ENCODE measurements at regions of chr12 and their contacts with region 1.

Region 1: DNA sequence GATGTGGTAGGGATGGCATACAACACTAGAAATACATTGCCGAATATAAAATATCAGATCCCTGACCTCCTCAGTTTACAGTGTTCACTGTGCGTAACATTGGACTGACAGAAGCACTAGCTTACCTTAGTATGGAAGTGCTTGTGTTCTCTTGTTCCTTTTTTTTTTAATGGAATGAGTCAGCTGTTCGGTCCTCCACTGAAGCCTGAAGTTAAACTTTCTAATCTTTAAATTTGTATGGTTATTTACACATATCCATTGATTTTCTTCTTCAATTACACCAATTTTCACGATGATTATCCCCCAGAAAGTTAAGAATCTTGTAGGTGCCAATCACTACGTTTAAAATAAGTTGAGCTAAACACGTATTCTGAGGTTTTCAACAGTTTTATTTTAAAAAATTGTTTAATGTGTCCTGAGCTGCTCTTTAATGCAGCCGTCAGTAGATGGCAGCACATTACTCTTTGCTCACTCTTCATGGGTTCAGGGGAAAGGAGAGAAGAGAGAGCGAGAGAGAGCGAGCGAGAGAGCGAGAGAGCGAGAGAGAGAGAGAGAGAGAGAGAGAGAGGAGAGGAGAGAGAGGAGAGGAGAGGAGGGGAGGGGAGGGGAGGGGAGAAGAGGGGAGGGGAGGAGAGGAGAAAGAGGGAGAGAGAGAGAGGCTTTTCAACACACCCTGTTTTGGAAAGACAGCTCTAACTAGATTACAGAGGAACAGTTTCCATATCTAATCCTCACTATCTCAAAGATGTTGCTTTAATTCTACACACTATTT is 134.7 kb upstream of the SCAF11 start:
- DNase-seq: peak; percentile 69
- H3K4me3 Mint-ChIP-seq: peak overlapping the region; percentile 49
- H3K27ac Mint-ChIP-seq: peak overlapping the region; percentile 71
- H3K4me1 Mint-ChIP-seq: peaks cover 3% of the 10 kb centered on the region
- H3K27me3 Mint-ChIP-seq: peaks cover 24% of the 10 kb centered on the region

Region 2: GRCh38 chr12:45713078-45713477 is 412.0 kb before region 1 on chr12:
- CTCF ChIA-PET with region 1: no interaction called
- DNase-seq: no peak
- H3K4me3 Mint-ChIP-seq: no peak overlapping the region
- H3K27ac Mint-ChIP-seq: no peak overlapping the region
- H3K4me1 Mint-ChIP-seq: no peaks in the 10 kb centered on the region
- H3K27me3 Mint-ChIP-seq: no peaks in the 10 kb centered on the region

Region 3: DNA sequence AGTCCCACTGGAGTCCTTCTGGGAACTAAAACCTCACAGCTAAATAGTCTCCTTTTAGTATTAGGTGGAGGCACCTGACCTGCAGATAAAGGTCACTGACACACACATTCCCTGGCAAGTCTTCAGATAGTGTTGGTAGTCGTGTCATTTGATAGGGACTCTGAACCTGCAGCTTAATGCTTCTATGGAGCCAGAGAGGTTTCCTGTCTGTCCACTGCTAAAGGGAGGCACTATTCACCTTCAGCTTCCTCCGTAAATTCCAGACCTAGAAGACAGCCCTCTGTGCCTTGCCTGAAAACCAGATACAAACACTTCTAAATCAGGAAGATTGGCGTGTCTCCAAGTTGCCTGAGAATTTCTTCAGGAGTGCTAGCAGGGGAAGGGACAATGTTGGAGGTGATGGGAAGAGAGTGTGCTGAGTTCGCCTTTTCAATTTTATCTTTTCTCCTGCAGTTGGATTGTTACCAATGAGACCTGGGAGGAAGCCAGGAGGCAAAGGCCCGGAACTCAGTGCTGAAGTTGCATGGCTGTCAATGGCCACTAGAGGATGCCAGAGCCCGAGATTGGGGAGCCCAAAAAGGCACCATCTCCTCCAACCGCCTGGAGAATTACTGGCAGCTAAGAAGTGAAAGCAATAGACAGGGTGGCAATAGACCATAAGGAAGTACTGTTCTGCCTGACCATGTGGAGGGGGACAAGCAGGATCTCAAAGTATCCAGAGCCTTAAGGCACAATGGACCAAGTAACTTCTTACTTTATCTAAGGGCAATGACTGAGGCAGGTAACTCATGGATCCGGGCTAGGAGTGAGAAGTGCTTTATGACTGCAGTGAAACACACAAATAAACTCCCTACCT is 53.0 kb before region 1 on chr12:
- CTCF ChIA-PET with region 1: interaction called, 10 read pairs
- DNase-seq: peak; percentile 70
- H3K4me3 Mint-ChIP-seq: no peak overlapping the region
- H3K27ac Mint-ChIP-seq: no peak overlapping the region
- H3K4me1 Mint-ChIP-seq: peaks cover 20% of the 10 kb centered on the region
- H3K27me3 Mint-ChIP-seq: no peaks in the 10 kb centered on the region

Region 4: DNA sequence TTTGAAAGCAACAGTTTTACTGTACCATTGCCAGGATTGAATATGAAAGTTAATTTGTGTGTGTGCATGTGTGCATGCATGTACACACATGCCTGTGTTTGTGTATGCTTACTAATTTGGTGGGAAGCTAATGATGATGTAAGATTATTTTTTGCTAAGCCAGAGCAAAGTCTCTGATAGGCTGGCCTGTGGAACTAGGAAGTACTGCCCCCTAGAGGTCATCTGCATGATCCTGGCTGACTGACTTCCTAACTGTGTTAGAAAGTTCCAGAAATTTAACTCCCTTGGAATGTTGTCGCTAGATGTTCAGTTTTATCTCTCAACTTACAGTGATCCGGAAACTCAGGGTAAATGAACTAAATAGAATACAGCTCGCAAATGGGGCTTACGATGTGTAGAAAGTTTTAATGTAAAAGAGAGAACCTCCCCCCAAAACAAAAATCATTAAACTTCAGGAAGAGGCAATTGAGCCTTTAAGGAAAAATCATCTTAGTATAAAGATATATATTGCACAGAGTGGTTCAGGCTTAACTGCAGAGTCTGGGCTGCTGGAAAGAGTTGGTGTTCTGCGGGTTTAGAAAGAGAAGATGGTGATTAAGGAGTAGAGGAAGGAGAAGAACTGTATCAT is 178.1 kb after region 1 on chr12:
- CTCF ChIA-PET with region 1: interaction called, 29 read pairs
- DNase-seq: peak; percentile 60
- H3K4me3 Mint-ChIP-seq: no peak overlapping the region
- H3K27ac Mint-ChIP-seq: no peak overlapping the region
- H3K4me1 Mint-ChIP-seq: peaks cover 3% of the 10 kb centered on the region
- H3K27me3 Mint-ChIP-seq: peaks cover 8% of the 10 kb centered on the region

Region 5: DNA sequence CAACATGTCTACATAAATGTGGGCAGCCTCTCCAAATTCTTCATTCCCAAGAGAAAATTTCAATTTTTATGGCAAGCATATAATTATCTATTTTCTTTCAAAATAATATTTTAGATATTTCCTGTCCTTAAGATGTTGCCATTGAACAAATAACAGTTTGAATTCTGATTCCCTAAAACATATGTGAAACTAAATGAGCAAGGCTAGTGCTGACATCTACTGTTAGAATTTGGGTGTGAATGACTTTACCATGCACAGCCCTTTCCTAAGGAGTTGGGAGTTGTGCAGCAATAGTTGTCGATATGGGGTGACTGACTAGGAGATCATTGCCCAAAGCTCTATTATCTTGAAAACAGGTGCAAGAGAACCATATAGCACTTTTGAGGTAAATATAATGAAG is 808.9 kb after region 1 on chr12:
- CTCF ChIA-PET with region 1: interaction called, 10 read pairs
- DNase-seq: no peak
- H3K4me3 Mint-ChIP-seq: no peak overlapping the region
- H3K27ac Mint-ChIP-seq: no peak overlapping the region
- H3K4me1 Mint-ChIP-seq: no peaks in the 10 kb centered on the region
- H3K27me3 Mint-ChIP-seq: peaks cover 16% of the 10 kb centered on the region

Region 6: DNA sequence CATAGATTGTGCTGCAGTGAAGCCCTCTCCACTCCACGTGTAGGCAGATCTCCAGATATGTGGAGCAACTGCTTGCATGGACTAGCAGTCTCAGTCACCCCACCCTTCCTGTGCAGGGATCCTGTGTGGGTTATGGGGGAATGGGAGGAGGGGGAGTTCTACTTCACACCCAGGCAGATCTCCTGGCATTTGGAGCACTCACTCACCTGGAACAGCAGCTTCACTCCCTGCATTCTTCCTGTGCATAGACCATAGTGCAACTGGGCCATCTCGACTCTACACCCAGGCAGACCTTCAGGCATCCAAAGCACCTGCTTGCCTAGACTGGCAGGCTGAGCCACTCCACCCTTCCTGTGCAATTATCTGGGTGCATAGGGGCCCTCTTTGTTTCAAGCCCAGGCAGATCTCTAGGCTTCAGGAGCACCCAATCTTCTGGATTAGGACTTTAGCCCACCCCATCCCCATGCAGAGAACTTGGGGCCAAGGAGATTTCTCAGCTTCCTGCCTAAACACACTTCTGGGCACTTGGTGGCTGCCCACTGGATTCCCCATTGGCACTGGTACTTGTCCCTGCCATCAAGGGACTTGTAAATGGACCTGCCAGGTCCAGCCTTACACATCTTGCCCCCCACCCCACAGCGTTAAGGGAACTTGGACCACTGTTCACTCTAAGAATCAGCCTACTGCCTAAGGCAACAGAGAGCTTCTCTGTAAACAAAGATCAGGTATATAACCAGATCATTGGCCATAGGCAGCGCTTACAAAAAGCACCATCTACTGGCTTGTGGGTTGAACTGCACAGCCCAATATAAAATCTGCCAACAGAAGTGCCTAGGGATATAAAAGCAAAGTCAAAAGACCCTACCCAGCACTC is 858.6 kb after region 1 on chr12:
- CTCF ChIA-PET with region 1: interaction called, 12 read pairs
- DNase-seq: peak; percentile 53
- H3K4me3 Mint-ChIP-seq: no peak overlapping the region
- H3K27ac Mint-ChIP-seq: no peak overlapping the region
- H3K4me1 Mint-ChIP-seq: peaks cover 14% of the 10 kb centered on the region
- H3K27me3 Mint-ChIP-seq: peaks cover 3% of the 10 kb centered on the region

Region 7: DNA sequence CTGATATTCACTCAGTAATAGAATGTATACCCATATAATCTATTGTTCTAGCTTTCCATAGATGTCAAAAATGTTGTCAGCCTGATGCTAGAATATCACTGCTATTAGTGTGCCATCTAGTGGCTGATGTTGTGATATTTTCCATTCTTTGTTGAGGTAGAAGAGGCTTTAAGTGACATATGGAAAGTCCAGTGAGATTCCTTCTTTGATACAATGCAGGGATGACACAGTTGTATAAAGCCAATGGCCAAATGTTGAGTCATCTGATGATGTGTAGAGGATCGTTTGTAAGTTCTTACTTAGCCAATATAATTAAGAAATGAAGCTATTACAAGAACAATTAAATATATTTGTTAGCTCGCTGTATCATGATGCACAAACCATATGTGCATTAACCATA is 896.3 kb after region 1 on chr12:
- CTCF ChIA-PET with region 1: interaction called, 25 read pairs
- DNase-seq: no peak
- H3K4me3 Mint-ChIP-seq: no peak overlapping the region
- H3K27ac Mint-ChIP-seq: no peak overlapping the region
- H3K4me1 Mint-ChIP-seq: no peaks in the 10 kb centered on the region
- H3K27me3 Mint-ChIP-seq: peaks cover 21% of the 10 kb centered on the region

Region 8: DNA sequence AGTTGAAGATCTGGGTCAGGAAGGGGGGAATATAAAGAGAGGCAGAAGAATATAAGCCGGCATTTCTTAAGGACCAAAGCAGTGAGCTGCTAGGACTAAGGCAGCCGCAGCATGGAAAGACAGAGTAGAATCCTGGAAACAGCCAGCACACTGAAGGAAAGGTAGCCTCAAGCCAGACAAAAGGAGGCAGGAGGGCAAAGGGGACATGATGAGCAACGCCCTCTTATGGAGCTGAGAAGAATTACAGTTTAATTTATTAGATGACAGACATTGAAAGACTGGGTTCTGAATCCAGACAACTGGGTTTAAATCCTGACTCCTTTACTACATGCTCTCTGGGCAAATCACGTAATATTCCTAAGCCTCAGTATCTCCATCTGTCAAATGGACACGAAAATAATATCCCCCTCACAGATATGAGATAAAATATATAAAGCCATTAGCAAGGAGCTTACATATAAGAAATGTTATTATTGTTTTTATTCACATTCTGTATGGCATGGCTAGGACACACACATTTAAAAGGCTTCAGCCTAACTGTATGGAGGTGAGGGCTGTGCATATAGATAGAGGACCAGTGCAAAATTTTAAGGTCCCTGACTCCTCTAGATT is 946.3 kb after region 1 on chr12:
- CTCF ChIA-PET with region 1: interaction called, 10 read pairs
- DNase-seq: no peak
- H3K4me3 Mint-ChIP-seq: no peak overlapping the region
- H3K27ac Mint-ChIP-seq: no peak overlapping the region
- H3K4me1 Mint-ChIP-seq: peaks cover under 1% of the 10 kb centered on the region
- H3K27me3 Mint-ChIP-seq: no peaks in the 10 kb centered on the region